ENCODE measurements at regions of chr13 and their contacts with region 1.

Region 1: DNA sequence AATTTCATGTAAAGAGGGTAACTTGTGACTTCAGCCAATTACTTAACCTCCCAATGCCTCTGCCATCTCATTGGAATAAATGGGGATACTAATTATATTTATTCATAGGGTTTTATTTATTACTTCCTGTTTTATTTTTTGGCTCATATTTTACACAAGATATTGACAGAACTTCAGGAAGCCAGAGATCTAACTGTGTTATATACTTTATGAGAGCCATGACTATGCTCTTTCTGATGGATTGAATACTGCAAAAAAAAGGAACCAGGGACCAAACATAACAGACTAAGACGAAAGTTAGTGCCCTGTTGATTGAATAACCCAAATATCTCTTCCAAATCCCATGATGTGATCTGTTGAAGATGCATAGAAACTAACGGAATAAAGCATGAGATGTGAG is 243.3 kb upstream of the STARD13 start:
- DNase-seq: no peak
- H3K4me3 ChIP-seq: no peak overlapping the region
- H3K27ac ChIP-seq: no peak overlapping the region
- H3K4me1 ChIP-seq: peaks cover 28% of the 10 kb centered on the region
- H3K27me3 ChIP-seq: no peaks in the 10 kb centered on the region
- CTCF ChIP-seq: no peak

Region 2: GRCh38 chr13:33554919-33555791 is 26.3 kb after region 1 on chr13:
- intact Hi-C with region 1: loop called (anchors 2 kb)
- DNase-seq: no peak
- H3K4me3 ChIP-seq: no peak overlapping the region
- H3K27ac ChIP-seq: peak overlapping the region; percentile 53
- H3K4me1 ChIP-seq: peaks cover 21% of the 10 kb centered on the region
- H3K27me3 ChIP-seq: no peaks in the 10 kb centered on the region
- CTCF ChIP-seq: no peak

Measured in left ventricle myocardium inferior (tissue), 1 donor.